ENCODE measurements at regions of chr13 and their contacts with region 1.

Region 1: DNA sequence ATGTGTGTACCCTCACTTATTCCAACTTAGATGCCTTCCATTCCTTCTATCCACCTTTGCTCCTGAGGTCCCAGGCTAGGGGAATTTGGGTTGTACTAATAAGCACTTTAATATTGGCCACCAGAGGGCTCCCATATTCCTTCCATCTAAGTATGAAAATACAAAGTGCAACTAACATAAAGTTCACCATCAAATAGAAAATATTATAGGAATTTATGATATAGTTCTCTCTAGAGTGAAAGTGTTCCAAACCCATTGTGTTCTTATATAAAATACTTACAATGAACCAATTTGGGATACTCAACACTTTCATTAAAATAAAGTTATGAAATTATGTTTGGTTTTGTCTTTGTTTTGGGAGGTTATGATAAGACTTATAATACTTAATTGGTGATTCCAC is 62.3 kb downstream of the ITGBL1 start:
- H3K4me3 ChIP-seq: no peak overlapping the region
- H3K27ac ChIP-seq: no peak overlapping the region
- H3K4me1 ChIP-seq: no peaks in the 10 kb centered on the region
- CTCF ChIP-seq: no peak

Region 2: GRCh38 chr13:101307181-101307701 is 207.5 kb before region 1 on chr13:
- CTCF ChIA-PET with region 1: no interaction called
- POLR2A ChIA-PET with region 1: no interaction called
- H3K4me3 ChIP-seq: no peak overlapping the region
- H3K27ac ChIP-seq: no peak overlapping the region
- H3K4me1 ChIP-seq: no peaks in the 10 kb centered on the region
- CTCF ChIP-seq: no peak

Region 3: DNA sequence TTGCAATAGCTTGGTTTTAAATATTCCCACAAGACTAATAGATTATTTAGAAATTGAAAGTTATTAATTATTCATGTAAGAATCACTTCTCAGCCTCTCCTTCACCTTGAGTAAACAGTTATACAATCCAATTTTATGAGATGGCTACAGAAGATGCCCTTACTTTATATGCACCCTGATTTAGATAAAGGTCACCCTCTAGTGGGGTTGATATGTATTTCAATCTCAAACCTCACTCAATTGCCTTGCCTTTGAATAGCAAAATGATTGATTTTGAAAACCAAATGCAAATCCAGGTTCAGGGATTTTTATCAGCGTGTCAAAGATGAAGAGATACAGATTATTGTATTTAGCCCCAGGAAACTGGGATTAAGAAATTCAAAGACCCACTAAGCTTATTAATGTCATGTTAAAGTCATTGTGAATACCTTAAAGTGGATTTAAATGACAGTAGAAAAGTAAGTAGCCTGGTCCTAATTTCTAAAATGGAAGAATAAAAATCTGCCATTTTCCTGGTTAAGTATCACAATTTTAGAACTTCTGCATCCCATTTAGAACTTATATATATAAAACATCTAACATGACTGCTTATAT is 242.8 kb after region 1 on chr13:
- CTCF ChIA-PET with region 1: interaction called, 15 read pairs
- POLR2A ChIA-PET with region 1: no interaction called
- H3K4me3 ChIP-seq: no peak overlapping the region
- H3K27ac ChIP-seq: no peak overlapping the region
- H3K4me1 ChIP-seq: no peaks in the 10 kb centered on the region
- CTCF ChIP-seq: no peak

Region 4: GRCh38 chr13:101977475-101977874 is 462.7 kb after region 1 on chr13:
- CTCF ChIA-PET with region 1: no interaction called
- POLR2A ChIA-PET with region 1: no interaction called
- H3K4me3 ChIP-seq: no peak overlapping the region
- H3K27ac ChIP-seq: no peak overlapping the region
- H3K4me1 ChIP-seq: no peaks in the 10 kb centered on the region
- CTCF ChIP-seq: no peak